ENCODE measurements at regions of chr16 and their contacts with region 1.

Region 1: GRCh38 chr16:48499923-48500381 is 110.0 kb downstream of the N4BP1 start:
- DNase-seq: peak in 1 of 2 experiments; percentile 34
- H3K4me3 ChIP-seq: no peak overlapping the region
- H3K4me1 ChIP-seq: peaks cover 8% of the 10 kb centered on the region
- H3K27me3 ChIP-seq: no peaks in the 10 kb centered on the region

Region 2: DNA sequence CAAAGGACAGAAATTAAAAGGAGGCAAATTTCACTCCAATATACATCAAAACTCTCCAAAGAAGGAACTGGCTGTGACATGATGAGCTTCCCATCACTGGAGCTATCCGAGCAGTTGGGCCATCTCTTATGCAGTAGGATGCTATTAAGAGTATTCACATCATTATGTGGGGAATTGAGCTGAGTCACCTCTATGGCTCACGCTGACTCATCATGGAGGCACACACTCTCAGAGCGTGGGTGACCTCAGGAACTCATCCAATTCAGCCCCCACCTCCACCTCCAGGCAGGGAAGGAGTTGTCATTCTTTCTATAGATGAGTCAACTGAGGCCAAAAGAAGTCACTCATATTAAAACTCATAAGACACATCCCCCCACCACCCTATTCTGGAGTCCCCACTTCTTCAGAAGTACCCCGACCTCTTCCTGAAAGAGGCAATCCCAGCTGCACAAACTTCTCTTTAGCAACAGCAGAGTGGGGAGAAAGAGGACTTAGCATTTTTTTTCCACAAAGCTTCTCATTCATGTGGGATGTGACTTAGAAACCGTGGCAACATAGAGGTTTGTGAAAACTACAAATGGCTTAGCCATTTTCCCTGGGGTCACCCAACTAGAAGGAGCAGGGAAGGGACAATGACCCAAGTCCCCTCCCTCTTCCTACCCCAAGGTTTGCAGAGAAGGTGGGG is 376.7 kb before region 1 on chr16:
- in situ Hi-C with region 1: no loop called
- DNase-seq: no peak
- H3K4me3 ChIP-seq: no peak overlapping the region
- H3K4me1 ChIP-seq: no peaks in the 10 kb centered on the region
- H3K27me3 ChIP-seq: no peaks in the 10 kb centered on the region

Region 3: DNA sequence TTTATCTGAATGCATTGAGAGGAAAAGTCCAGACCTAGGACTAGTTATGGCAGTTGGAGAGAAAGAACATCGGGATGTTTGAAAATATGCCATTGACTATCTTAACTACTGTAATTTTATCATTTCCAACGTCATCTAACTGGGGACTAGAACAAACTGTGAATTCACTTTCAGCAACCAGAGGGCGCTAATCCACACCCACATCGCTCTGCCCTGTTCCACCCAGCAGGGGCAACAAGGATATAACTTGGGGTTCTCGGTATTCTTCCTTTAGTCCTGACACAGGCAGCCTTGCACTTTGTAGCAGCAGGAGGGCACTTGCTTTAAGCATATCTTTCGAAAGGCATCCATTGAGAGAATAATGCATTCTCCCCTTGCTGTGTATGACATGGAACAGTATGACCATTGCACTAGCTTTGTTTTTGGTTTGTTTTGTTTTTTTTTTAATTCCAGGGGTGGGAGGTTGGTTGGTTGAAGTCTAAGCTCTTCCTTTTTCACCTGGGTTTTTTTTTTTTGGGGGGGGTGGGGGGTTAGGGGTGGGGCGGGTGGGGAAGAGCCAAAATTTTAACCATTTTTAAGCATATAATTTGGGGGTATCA is 146.3 kb before region 1 on chr16:
- in situ Hi-C with region 1: no loop called
- DNase-seq: peak; percentile 64 to 75
- H3K4me3 ChIP-seq: no peak overlapping the region
- H3K4me1 ChIP-seq: no peaks in the 10 kb centered on the region
- H3K27me3 ChIP-seq: no peaks in the 10 kb centered on the region

Region 4: GRCh38 chr16:48596326-48596725 is 96.4 kb after region 1 on chr16:
- in situ Hi-C with region 1: loop called (anchors 25 kb)
- DNase-seq: no peak
- H3K4me3 ChIP-seq: no peak overlapping the region
- H3K4me1 ChIP-seq: no peaks in the 10 kb centered on the region
- H3K27me3 ChIP-seq: no peaks in the 10 kb centered on the region

Region 5: GRCh38 chr16:48831076-48831722 is 331.2 kb after region 1 on chr16:
- in situ Hi-C with region 1: no loop called
- DNase-seq: peak in 1 of 2 experiments; percentile 28
- H3K4me3 ChIP-seq: no peak overlapping the region
- H3K4me1 ChIP-seq: no peaks in the 10 kb centered on the region
- H3K27me3 ChIP-seq: no peaks in the 10 kb centered on the region

Measured in HAP-1 (cell line).